Heart left ventricle (tissue), 16 donors: ENCODE measurements at regions of chr17 and their contacts with region 1.

Region 1: GRCh38 chr17:10984220-10984619 is 146.3 kb upstream of the PIRT start:
- DNase-seq: no peak
- ATAC-seq: no peak
- H3K4me3 ChIP-seq: no peak overlapping the region
- H3K27ac ChIP-seq: no peak overlapping the region
- H3K4me1 ChIP-seq: no peaks in the 10 kb centered on the region
- H3K27me3 ChIP-seq: no peaks in the 10 kb centered on the region
- CTCF ChIP-seq: no peak
- POLR2A ChIP-seq: no peak

Region 2: GRCh38 chr17:11031787-11032186 is 47.6 kb after region 1 on chr17:
- intact Hi-C with region 1: loop called in 1 of 10 experiments (anchors 10 kb)
- DNase-seq: no peak
- ATAC-seq: no peak
- H3K4me3 ChIP-seq: no peak overlapping the region
- H3K27ac ChIP-seq: no peak overlapping the region
- H3K4me1 ChIP-seq: no peaks in the 10 kb centered on the region
- H3K27me3 ChIP-seq: no peaks in the 10 kb centered on the region
- CTCF ChIP-seq: no peak
- POLR2A ChIP-seq: no peak